Activated CD8-positive, alpha-beta T cell treated with anti-CD3 and anti-CD28 coated beads for 36 hours (primary cell): ENCODE measurements at regions of chr11 and their contacts with region 1.

Region 1: DNA sequence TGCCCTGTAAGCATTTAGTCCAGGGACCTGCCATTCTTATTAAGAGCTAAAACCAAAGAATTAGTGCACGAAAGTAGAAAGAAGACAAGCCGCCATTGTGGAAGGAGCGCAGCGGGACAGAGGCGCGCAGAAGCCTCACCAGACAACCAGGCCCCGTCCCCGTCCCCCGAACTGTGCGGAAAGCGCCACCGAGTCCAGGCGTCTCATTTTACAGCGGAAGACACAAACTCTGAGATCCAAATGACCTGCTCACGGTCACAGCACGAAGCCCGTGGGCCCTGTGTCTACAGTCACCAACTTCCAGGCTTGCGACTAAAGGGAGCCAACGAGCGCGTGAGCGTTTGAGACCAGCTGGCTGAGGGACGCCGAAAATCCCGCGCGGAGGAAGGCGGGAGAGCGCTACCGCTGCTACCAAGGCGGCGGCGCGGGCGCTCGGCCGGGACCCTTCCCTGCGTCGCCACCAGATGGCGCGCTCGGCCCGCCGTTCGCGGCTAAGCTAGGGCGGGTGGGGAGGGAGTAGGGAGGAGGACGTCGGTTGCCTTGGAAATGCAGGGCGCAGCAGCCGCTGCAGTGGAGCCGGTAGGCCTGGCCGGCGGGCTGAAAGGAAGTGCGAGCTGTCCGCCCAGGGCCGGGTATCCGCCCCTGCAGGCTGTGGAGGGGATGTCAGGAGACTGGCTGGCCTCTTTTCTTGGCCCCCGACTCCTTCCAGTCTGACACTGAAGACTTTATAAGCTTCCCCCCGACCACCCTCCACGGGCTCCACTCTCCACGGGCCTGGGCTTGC is 434 bp upstream of the CCDC83 start:
- DNase-seq: peak; percentile 89
- ATAC-seq: peak; percentile 96
- H3K4me3 Mint-ChIP-seq: peak overlapping the region; percentile 89
- H3K27ac Mint-ChIP-seq: peak overlapping the region; percentile 93
- H3K4me1 Mint-ChIP-seq: peaks cover 10% of the 10 kb centered on the region
- H3K27me3 Mint-ChIP-seq: no peaks in the 10 kb centered on the region
- CTCF ChIP-seq: peak; percentile 89

Region 2: GRCh38 chr11:85810871-85811611 is 43.7 kb before region 1 on chr11 and contains the start of gene SYTL2:
- CTCF ChIA-PET with region 1: interaction called, 10 read pairs
- POLR2A ChIA-PET with region 1: no interaction called
- intact Hi-C with region 1: no loop called
- DNase-seq: peak; percentile 71
- ATAC-seq: peak; percentile 89
- H3K4me3 Mint-ChIP-seq: peak within 1 kb of the TSS; percentile 80
- H3K27ac Mint-ChIP-seq: peak within 1 kb of the TSS; percentile 80
- H3K4me1 Mint-ChIP-seq: peaks cover 23% of the 10 kb centered on the region
- H3K27me3 Mint-ChIP-seq: peaks cover 9% of the 10 kb centered on the region
- CTCF ChIP-seq: no peak
- total RNA-seq, gene SYTL2: 9.5 to 11.2 TPM

Region 3: DNA sequence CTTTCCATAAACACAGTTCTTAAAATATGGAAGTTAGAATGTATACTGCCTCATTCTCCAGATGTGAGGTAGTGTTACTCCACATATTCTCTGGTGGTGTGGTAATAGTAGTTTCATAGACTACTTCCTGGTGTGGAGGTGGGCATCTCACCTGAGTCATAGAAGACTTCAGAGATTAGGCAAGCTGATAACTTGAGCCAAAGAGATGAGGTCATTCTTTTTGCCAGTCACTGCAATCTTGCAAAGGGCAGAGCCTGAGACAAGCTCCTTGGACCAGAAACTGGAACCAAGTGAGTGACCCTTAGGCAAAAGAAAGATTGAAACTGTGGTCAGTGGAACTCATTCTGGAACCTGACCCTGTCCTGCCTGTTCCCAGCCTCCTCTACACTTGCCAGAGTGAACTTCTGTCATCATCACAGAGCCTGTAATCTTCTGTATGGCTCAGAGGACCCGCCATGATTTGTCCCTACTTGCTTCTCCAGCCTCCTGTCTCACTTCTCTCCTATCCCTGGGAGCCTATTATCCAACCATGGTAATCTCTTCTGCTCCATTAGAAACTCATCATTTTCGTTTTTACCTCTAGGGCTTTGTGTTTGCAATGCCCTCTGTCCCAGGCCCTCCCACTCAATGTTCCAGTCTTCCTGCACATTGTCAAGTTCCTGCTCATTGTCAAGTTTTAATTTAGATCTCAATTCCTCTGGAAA is 10.2 kb before region 1 on chr11:
- CTCF ChIA-PET with region 1: interaction called, 15 read pairs
- POLR2A ChIA-PET with region 1: interaction called, 3 read pairs
- intact Hi-C with region 1: no loop called
- DNase-seq: peak; percentile 8
- ATAC-seq: peak; percentile 85
- H3K4me3 Mint-ChIP-seq: no peak overlapping the region
- H3K27ac Mint-ChIP-seq: no peak overlapping the region
- H3K4me1 Mint-ChIP-seq: peaks cover 7% of the 10 kb centered on the region
- H3K27me3 Mint-ChIP-seq: no peaks in the 10 kb centered on the region
- CTCF ChIP-seq: no peak

Region 4: GRCh38 chr11:86202013-86202336 is 347.2 kb after region 1 on chr11:
- CTCF ChIA-PET with region 1: interaction called, 4 read pairs
- POLR2A ChIA-PET with region 1: no interaction called
- intact Hi-C with region 1: loop called (anchors 10 kb)
- DNase-seq: peak; percentile 40
- ATAC-seq: peak; percentile 90
- H3K4me3 Mint-ChIP-seq: no peak overlapping the region
- H3K27ac Mint-ChIP-seq: no peak overlapping the region
- H3K4me1 Mint-ChIP-seq: peaks cover 6% of the 10 kb centered on the region
- H3K27me3 Mint-ChIP-seq: no peaks in the 10 kb centered on the region
- CTCF ChIP-seq: no peak